PC-3 (cell line): ENCODE measurements at regions of chr4 and their contacts with region 1.

Region 1: DNA sequence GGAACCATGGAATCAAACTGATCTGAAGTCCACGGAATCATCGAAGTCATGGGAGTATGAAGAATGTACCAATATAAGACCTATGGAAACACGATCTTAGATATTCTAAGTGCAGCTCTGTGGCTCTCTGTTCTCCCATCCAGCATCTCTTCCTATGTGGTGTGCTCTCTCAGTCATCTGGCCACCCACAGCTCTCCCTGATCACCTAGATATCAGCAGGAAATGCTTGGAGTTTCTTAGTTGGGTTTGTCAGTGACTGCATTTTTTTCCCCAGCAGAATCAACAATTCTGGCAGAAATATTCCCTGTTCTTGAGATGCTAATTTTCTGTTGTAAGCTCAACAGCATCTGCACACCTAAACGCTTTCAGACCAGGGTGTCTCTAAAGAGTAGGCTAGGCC is 94.1 kb downstream of the GC start:
- DNase-seq: no peak
- ATAC-seq: no peak
- H3K4me3 ChIP-seq: no peak overlapping the region
- H3K27ac ChIP-seq: no peak overlapping the region
- H3K4me1 ChIP-seq: no peaks in the 10 kb centered on the region
- H3K27me3 ChIP-seq: no peaks in the 10 kb centered on the region
- CTCF ChIP-seq: no peak

Region 2: DNA sequence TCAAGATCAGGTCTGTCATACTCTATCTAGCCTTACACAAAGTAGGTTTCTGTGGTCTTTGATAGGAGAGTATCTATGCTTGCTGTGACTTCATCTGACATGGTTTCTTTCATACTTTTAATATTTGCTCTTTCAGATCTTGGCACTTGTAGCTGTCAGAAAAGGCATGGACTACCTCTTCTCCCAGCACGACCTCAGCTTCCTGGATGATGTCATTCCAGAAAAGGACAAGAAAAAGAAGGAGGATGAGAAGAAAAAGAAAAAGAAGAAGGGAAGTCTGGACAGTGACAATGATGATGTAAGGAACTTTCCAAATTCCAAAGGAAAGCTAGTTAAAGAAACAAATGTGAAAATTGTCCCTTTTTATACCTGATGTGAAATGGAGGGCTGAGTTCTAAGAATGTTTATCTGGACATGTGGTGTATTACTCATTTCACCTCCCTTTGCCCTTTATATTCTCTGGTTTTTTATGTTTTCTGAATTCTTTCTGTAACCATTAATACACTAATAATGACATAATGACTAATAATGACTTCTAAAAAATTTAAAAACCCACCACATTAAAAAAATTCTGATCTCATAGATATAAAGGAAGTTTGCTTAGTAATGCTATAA is 129.8 kb before region 1 on chr4:
- CTCF ChIA-PET with region 1: no interaction called
- POLR2A ChIA-PET with region 1: interaction called, 19 read pairs
- intact Hi-C with region 1: no loop called
- DNase-seq: peak; percentile 85
- ATAC-seq: peak; percentile 85
- H3K4me3 ChIP-seq: no peak overlapping the region
- H3K27ac ChIP-seq: peak overlapping the region; percentile 93
- H3K4me1 ChIP-seq: peaks cover 37% of the 10 kb centered on the region
- H3K27me3 ChIP-seq: no peaks in the 10 kb centered on the region
- CTCF ChIP-seq: no peak

Region 3: DNA sequence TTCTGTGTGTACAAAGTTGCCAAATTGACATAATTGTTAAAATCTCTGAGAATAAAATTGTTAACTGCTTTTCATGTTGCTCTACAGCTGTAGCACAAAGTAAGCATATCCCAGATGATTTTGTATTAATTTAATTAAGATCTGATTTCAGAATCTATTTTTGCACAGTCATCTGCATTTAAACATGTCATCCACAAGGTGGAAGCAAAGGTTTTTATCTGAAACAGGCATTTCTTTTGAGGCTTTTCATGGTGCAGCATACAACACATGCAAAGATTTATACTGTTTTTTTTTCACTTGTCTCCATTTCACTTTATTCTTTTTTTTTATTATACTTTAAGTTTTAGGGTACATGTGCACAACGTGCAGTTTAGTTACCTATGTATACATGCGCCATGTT is 42.9 kb after region 1 on chr4:
- CTCF ChIA-PET with region 1: no interaction called
- POLR2A ChIA-PET with region 1: no interaction called
- intact Hi-C with region 1: no loop called
- DNase-seq: peak; percentile 73
- ATAC-seq: peak; percentile 38; the same call in 1 of the 2 replicates
- H3K4me3 ChIP-seq: no peak overlapping the region
- H3K27ac ChIP-seq: no peak overlapping the region
- H3K4me1 ChIP-seq: no peaks in the 10 kb centered on the region
- H3K27me3 ChIP-seq: no peaks in the 10 kb centered on the region
- CTCF ChIP-seq: peak; percentile 77

Region 4: GRCh38 chr4:71958978-71959377 is 269.2 kb after region 1 on chr4:
- CTCF ChIA-PET with region 1: no interaction called
- POLR2A ChIA-PET with region 1: no interaction called
- intact Hi-C with region 1: no loop called
- DNase-seq: no peak
- ATAC-seq: no peak
- H3K4me3 ChIP-seq: no peak overlapping the region
- H3K27ac ChIP-seq: no peak overlapping the region
- H3K4me1 ChIP-seq: no peaks in the 10 kb centered on the region
- H3K27me3 ChIP-seq: no peaks in the 10 kb centered on the region
- CTCF ChIP-seq: no peak